HepG2 (cell line): ENCODE measurements at regions of chr2 and their contacts with region 1.

Region 1: GRCh38 chr2:119826370-119826961 is 66.7 kb downstream of the PTPN4 start:
- DNase-seq: peak; percentile 54
- ATAC-seq: peak; percentile 92
- H3K4me3 ChIP-seq: no peak overlapping the region
- H3K27ac ChIP-seq: no peak overlapping the region
- H3K4me1 ChIP-seq: no peaks in the 10 kb centered on the region
- H3K27me3 ChIP-seq: no peaks in the 10 kb centered on the region
- CTCF ChIP-seq: peak; percentile 78
- EP300 ChIP-seq: no peak
- POLR2A ChIP-seq: no peak
- RAD21 ChIP-seq: peak; percentile 70

Region 2: DNA sequence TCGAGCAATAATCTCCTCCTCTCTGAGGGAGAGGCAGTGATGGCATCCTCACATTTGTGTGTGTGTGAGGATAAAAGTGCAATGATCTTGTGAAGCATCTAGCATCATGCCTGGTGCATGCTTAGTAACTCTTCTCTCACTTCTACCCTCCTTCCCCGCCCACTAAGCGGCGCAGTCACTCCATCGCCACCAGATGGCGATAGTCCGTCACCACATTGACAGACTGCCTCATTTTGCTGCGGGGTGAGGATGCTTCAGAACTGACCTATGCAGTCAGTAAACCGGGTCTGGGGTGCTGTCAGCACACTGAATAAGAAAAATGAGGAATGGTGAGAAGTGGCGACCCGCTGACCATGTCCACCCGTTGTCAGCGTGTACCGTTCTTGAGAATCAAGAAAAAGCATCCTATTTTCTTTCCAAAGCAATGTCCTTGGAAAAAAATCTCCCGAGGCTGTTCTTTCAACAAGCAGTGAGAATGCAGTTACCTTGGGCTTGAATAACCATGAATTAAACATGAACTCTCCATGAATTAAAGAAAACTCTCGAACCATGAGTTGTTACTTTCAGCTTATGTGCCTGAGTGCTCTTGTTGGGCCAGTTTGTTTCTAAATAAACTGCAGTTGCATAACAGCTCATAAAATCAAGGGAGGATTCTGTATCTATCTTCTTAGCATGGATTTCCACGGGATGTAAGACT is 184.8 kb before region 1 on chr2:
- CTCF ChIA-PET with region 1: interaction called, 5 read pairs
- POLR2A ChIA-PET with region 1: no interaction called
- in situ Hi-C with region 1: no loop called
- intact Hi-C with region 1: loop called (anchors 1 kb)
- DNase-seq: peak; percentile 70
- ATAC-seq: peak; percentile 95
- H3K4me3 ChIP-seq: no peak overlapping the region
- H3K27ac ChIP-seq: no peak overlapping the region
- H3K4me1 ChIP-seq: peaks cover 10% of the 10 kb centered on the region; the same call in 1 of the 2 replicates
- H3K27me3 ChIP-seq: peaks cover 2 to 36% of the 10 kb centered on the region in 2 experiments; a peak in 4 of 5 replicates
- CTCF ChIP-seq: peak; percentile 98
- EP300 ChIP-seq: no peak
- POLR2A ChIP-seq: no peak
- RAD21 ChIP-seq: peak; percentile 71

Region 3: GRCh38 chr2:119702918-119703401 is 123.5 kb before region 1 on chr2:
- CTCF ChIA-PET with region 1: interaction called, 47 read pairs
- POLR2A ChIA-PET with region 1: no interaction called
- in situ Hi-C with region 1: loop called (anchors 5 kb)
- intact Hi-C with region 1: loop called (anchors 1 kb)
- DNase-seq: peak; percentile 73
- ATAC-seq: peak; percentile 95
- H3K4me3 ChIP-seq: peak overlapping the region in 1 of 3 experiments; percentile 25; a peak in 2 of 6 replicates
- H3K27ac ChIP-seq: no peak overlapping the region
- H3K4me1 ChIP-seq: peaks cover 53% of the 10 kb centered on the region
- H3K27me3 ChIP-seq: peaks cover 2 to 4% of the 10 kb centered on the region in 2 experiments; a peak in 2 of 5 replicates
- CTCF ChIP-seq: peak; percentile 98
- EP300 ChIP-seq: no peak
- POLR2A ChIP-seq: no peak
- RAD21 ChIP-seq: peak; percentile 98

Region 4: GRCh38 chr2:119753041-119753929 is 73.2 kb before region 1 on chr2:
- CTCF ChIA-PET with region 1: interaction called, 72 read pairs
- POLR2A ChIA-PET with region 1: interaction called, 4 read pairs
- in situ Hi-C with region 1: no loop called
- intact Hi-C with region 1: loop called (anchors 1 kb)
- DNase-seq: peak; percentile 61
- ATAC-seq: peak; percentile 80
- H3K4me3 ChIP-seq: no peak overlapping the region
- H3K27ac ChIP-seq: no peak overlapping the region
- H3K4me1 ChIP-seq: peaks cover 20% of the 10 kb centered on the region
- H3K27me3 ChIP-seq: no peaks in the 10 kb centered on the region; a peak in 2 of 5 replicates
- CTCF ChIP-seq: peak; percentile 89
- EP300 ChIP-seq: no peak
- POLR2A ChIP-seq: no peak
- RAD21 ChIP-seq: peak; percentile 83